Motor neuron (in vitro differentiated cells): ENCODE measurements at regions of chr1 and their contacts with region 1.

Region 1: DNA sequence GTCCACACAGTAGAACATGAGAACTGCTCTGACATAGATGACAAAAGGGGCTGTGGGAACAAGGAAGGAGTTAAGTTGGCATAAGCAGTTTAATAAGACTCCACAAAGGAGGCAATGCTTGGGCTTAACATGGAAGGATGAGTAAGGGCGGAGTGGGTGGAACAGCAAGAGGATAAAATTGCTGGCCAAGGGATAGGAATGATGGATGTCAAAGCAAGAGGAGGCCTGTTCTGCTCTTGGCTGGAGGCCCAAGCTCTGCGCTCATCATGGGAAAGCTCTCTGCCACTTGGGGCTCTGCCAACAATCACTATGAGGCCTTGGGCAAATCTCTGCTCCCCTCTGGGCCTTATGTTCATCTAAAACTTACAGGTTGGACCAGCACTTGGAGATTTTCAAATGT is 98.3 kb upstream of the CAMK1G start:
- ATAC-seq: peak in 4 of 8 experiments; percentile 48 to 59 (median 54)
- H3K4me3 ChIP-seq: no peak overlapping the region
- H3K27ac ChIP-seq: no peak overlapping the region
- H3K4me1 ChIP-seq: peaks cover 11 to 24% of the 10 kb centered on the region in 2 donors

Region 2: GRCh38 chr1:209250861-209251637 is 234.1 kb before region 1 on chr1:
- in situ Hi-C with region 1: loop called in 1 of 9 experiments (anchors 10 kb)
- ATAC-seq: peak in 1 of 8 experiments; percentile 62
- H3K4me3 ChIP-seq: no peak overlapping the region
- H3K27ac ChIP-seq: no peak overlapping the region
- H3K4me1 ChIP-seq: peaks cover 6 to 17% of the 10 kb centered on the region in 2 donors